ENCODE measurements at regions of chr4 and their contacts with region 1.

Region 1: DNA sequence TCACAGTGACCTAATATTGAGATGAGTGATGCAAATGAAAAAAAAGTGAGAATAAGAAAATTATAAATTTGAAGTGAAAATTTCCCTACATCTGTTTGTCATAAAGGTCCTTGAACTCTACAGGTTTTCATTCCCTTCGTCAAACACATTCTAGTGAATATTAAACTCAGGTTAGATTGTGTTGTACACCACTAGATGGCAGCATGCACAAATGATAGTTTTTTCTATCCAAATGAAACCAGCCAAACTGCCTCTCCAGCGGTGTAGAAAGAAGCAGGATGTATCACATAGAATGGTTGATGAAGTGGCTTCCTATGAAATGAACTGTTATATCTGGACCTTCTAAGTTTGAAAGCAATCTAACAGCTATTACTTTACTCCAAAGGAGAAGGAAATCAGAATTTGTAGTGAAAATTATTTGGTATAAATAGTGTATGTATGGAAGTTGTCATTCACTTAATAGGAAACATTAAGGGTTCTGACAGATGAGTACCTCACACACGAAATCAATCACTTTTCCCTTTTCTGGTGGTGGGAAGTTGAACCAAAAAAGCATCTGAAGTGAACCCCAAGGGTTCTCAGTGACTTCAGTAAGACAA is 382.7 kb downstream of the UNC5C start:
- DNase-seq: peak; percentile 57
- ATAC-seq: peak; percentile 81
- H3K4me3 ChIP-seq: no peak overlapping the region
- H3K27ac ChIP-seq: no peak overlapping the region
- H3K4me1 ChIP-seq: no peaks in the 10 kb centered on the region
- H3K27me3 ChIP-seq: no peaks in the 10 kb centered on the region
- CTCF ChIP-seq: peak; percentile 41 to 71 (median 58); a peak in 4 of 6 replicates
- POLR2A ChIP-seq: no peak
- RAD21 ChIP-seq: peak; percentile 85

Region 2: DNA sequence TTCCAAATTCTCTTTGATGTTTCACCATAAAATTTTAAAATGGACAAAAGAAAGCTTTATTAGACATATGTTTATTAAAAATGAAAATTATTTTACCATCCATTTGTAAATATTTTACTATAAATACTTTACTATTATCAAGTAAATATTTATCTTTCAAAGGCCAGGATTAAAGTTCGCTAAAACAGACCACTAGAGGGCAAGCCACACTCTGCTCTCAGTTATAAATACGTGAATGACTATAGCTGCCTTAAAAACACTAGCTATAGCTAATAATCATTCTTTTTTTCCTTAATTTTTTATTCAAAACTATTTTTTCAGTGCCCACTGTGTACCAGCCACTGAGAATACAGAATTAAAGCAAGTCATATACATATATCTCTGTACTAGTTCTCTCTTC is 344.1 kb after region 1 on chr4:
- CTCF ChIA-PET with region 1: no interaction called
- POLR2A ChIA-PET with region 1: no interaction called
- RAD21 ChIA-PET with region 1: no interaction called
- intact Hi-C with region 1: loop called (anchors 10 kb)
- DNase-seq: no peak
- ATAC-seq: peak; percentile 44; the same call in 1 of the 2 replicates
- H3K4me3 ChIP-seq: peak overlapping the region in 1 of 2 experiments; percentile 3; a peak in 1 of 4 replicates
- H3K27ac ChIP-seq: peak overlapping the region; percentile 57; the same call in 1 of the 2 replicates
- H3K4me1 ChIP-seq: peaks cover 32 to 64% of the 10 kb centered on the region in 2 experiments
- H3K27me3 ChIP-seq: no peaks in the 10 kb centered on the region
- CTCF ChIP-seq: peak; percentile 48 to 63 (median 63); a peak in 5 of 6 replicates
- POLR2A ChIP-seq: no peak
- RAD21 ChIP-seq: peak; percentile 66

Region 3: GRCh38 chr4:96039803-96040436 is 873.9 kb after region 1 on chr4:
- CTCF ChIA-PET with region 1: no interaction called
- POLR2A ChIA-PET with region 1: no interaction called
- RAD21 ChIA-PET with region 1: no interaction called
- intact Hi-C with region 1: loop called (anchors 10 kb)
- DNase-seq: no peak
- ATAC-seq: no peak
- H3K4me3 ChIP-seq: no peak overlapping the region
- H3K27ac ChIP-seq: no peak overlapping the region
- H3K4me1 ChIP-seq: no peaks in the 10 kb centered on the region
- H3K27me3 ChIP-seq: no peaks in the 10 kb centered on the region
- CTCF ChIP-seq: no peak
- POLR2A ChIP-seq: no peak
- RAD21 ChIP-seq: no peak

Region 4: GRCh38 chr4:96352051-96352517 is 1186.1 kb after region 1 on chr4:
- CTCF ChIA-PET with region 1: no interaction called
- POLR2A ChIA-PET with region 1: no interaction called
- RAD21 ChIA-PET with region 1: no interaction called
- intact Hi-C with region 1: loop called (anchors 1 kb)
- DNase-seq: peak; percentile 34
- ATAC-seq: peak; percentile 62; the same call in 1 of the 2 replicates
- H3K4me3 ChIP-seq: no peak overlapping the region
- H3K27ac ChIP-seq: no peak overlapping the region
- H3K4me1 ChIP-seq: no peaks in the 10 kb centered on the region
- H3K27me3 ChIP-seq: no peaks in the 10 kb centered on the region
- CTCF ChIP-seq: peak; percentile 32 to 67 (median 48); a peak in 4 of 6 replicates
- POLR2A ChIP-seq: no peak
- RAD21 ChIP-seq: peak; percentile 74

Region 5: GRCh38 chr4:97153042-97153441 is 1987.0 kb after region 1 on chr4:
- CTCF ChIA-PET with region 1: no interaction called
- POLR2A ChIA-PET with region 1: no interaction called
- RAD21 ChIA-PET with region 1: no interaction called
- intact Hi-C with region 1: loop called (anchors 5 kb)
- DNase-seq: peak; percentile 10
- ATAC-seq: no peak; the same call in 1 of the 2 replicates
- H3K4me3 ChIP-seq: no peak overlapping the region
- H3K27ac ChIP-seq: no peak overlapping the region
- H3K4me1 ChIP-seq: no peaks in the 10 kb centered on the region
- H3K27me3 ChIP-seq: no peaks in the 10 kb centered on the region
- CTCF ChIP-seq: peak; percentile 23 to 51 (median 41); a peak in 4 of 6 replicates
- POLR2A ChIP-seq: no peak
- RAD21 ChIP-seq: peak; percentile 59